Endothelial cell of umbilical vein (primary cell): ENCODE measurements at regions of chr20 and their contacts with region 1.

Region 1: GRCh38 chr20:25319241-25320034 is 71.2 kb downstream of the ABHD12 start:
- DNase-seq: no peak
- H3K4me3 ChIP-seq: no peak overlapping the region
- H3K27ac ChIP-seq: no peak overlapping the region
- H3K4me1 ChIP-seq: no peaks in the 10 kb centered on the region
- H3K27me3 ChIP-seq: no peaks in the 10 kb centered on the region
- CTCF ChIP-seq: no peak
- POLR2A ChIP-seq: no peak

Region 2: GRCh38 chr20:25299806-25300205 is 19.6 kb before region 1 on chr20:
- CTCF ChIA-PET with region 1: interaction called, 10 read pairs
- POLR2A ChIA-PET with region 1: no interaction called
- dilution Hi-C with region 1: no loop called
- intact Hi-C with region 1: no loop called
- DNase-seq: no peak
- H3K4me3 ChIP-seq: no peak overlapping the region
- H3K27ac ChIP-seq: no peak overlapping the region
- H3K4me1 ChIP-seq: no peaks in the 10 kb centered on the region
- H3K27me3 ChIP-seq: no peaks in the 10 kb centered on the region
- CTCF ChIP-seq: no peak
- POLR2A ChIP-seq: no peak

Region 3: DNA sequence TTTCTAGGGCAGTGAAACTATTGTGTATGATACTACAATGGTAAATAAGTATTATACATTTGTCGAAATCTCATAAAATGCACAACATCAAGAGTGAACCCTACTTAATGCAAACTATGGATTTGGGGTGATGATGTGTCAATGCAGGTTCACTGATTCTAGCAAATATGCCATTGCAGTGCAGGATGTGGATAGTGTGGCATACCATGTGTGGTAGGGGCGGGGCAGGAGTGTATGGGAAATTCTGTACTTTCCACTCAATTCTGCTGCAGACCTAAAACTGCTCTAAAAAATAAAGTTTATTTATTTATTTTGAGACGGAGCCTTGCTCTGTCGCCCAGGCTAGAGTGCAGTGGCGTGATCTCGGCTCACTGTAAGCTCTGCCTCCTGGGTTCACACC is 26.9 kb after region 1 on chr20:
- CTCF ChIA-PET with region 1: no interaction called
- POLR2A ChIA-PET with region 1: no interaction called
- dilution Hi-C with region 1: no loop called
- intact Hi-C with region 1: loop called (anchors 2 kb)
- DNase-seq: no peak
- H3K4me3 ChIP-seq: no peak overlapping the region
- H3K27ac ChIP-seq: no peak overlapping the region
- H3K4me1 ChIP-seq: no peaks in the 10 kb centered on the region
- H3K27me3 ChIP-seq: no peaks in the 10 kb centered on the region
- CTCF ChIP-seq: no peak
- POLR2A ChIP-seq: no peak